RWPE1 (cell line): ENCODE measurements at regions of chr18 and their contacts with region 1.

Region 1: DNA sequence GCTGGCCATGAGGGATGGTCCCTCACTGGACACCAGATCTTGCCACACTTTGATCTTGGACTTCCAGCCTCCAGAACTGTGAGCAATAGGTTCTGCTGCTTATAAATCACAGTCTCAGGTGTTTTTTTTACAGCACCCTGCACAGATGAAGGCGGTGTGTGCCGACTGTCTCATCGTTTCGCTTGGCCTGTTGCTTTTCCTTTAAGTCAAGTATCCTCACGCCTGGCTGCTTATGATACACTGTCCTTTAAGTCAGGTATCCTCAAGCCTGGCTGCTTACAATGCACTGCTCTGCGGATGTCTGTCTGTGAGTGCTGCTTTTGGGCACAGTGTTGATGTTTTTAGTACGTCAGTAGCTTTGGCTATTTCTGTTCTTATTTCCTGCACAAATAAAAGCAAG is 40.3 kb downstream of the SALL3 start:
- DNase-seq: no peak
- H3K27ac ChIP-seq: no peak overlapping the region
- CTCF ChIP-seq: no peak

Region 2: GRCh38 chr18:78996741-78997490 is 23.0 kb before region 1 on chr18:
- CTCF ChIA-PET with region 1: interaction called, 11 read pairs
- POLR2A ChIA-PET with region 1: no interaction called
- DNase-seq: no peak
- H3K27ac ChIP-seq: no peak overlapping the region
- CTCF ChIP-seq: no peak